BJ (cell line): ENCODE measurements at regions of chr9 and their contacts with region 1.

Region 1: GRCh38 chr9:128034821-128035764 is 32.0 kb downstream of the NAIF1 start:
- DNase-seq: no peak
- H3K4me3 ChIP-seq: no peak overlapping the region
- H3K27me3 ChIP-seq: no peaks in the 10 kb centered on the region
- CTCF ChIP-seq: peak; percentile 72

Region 2: GRCh38 chr9:127937388-127938280 is 97.5 kb before region 1 on chr9 and contains the start of gene DPM2:
- CTCF ChIA-PET with region 1: interaction called, 342 read pairs
- POLR2A ChIA-PET with region 1: no interaction called
- DNase-seq: no peak
- H3K4me3 ChIP-seq: peak within 1 kb of the TSS; percentile 64
- H3K27me3 ChIP-seq: no peaks in the 10 kb centered on the region
- CTCF ChIP-seq: no peak
- polyA plus RNA-seq, gene DPM2: 35.0 and 55.3 TPM in 2 replicates

Region 3: GRCh38 chr9:127955294-127956035 is 79.6 kb before region 1 on chr9:
- CTCF ChIA-PET with region 1: interaction called, 342 read pairs
- POLR2A ChIA-PET with region 1: no interaction called
- DNase-seq: no peak
- H3K4me3 ChIP-seq: no peak overlapping the region
- H3K27me3 ChIP-seq: no peaks in the 10 kb centered on the region
- CTCF ChIP-seq: no peak

Region 4: GRCh38 chr9:128007566-128008138 is 27.4 kb before region 1 on chr9:
- CTCF ChIA-PET with region 1: interaction called, 12 read pairs
- POLR2A ChIA-PET with region 1: no interaction called
- DNase-seq: no peak
- H3K4me3 ChIP-seq: no peak overlapping the region
- H3K27me3 ChIP-seq: no peaks in the 10 kb centered on the region
- CTCF ChIP-seq: no peak

Region 5: GRCh38 chr9:128020692-128021091 is 14.4 kb before region 1 on chr9:
- CTCF ChIA-PET with region 1: interaction called, 29 read pairs
- POLR2A ChIA-PET with region 1: no interaction called
- DNase-seq: no peak
- H3K4me3 ChIP-seq: no peak overlapping the region
- H3K27me3 ChIP-seq: no peaks in the 10 kb centered on the region
- CTCF ChIP-seq: peak; percentile 31

Region 6: DNA sequence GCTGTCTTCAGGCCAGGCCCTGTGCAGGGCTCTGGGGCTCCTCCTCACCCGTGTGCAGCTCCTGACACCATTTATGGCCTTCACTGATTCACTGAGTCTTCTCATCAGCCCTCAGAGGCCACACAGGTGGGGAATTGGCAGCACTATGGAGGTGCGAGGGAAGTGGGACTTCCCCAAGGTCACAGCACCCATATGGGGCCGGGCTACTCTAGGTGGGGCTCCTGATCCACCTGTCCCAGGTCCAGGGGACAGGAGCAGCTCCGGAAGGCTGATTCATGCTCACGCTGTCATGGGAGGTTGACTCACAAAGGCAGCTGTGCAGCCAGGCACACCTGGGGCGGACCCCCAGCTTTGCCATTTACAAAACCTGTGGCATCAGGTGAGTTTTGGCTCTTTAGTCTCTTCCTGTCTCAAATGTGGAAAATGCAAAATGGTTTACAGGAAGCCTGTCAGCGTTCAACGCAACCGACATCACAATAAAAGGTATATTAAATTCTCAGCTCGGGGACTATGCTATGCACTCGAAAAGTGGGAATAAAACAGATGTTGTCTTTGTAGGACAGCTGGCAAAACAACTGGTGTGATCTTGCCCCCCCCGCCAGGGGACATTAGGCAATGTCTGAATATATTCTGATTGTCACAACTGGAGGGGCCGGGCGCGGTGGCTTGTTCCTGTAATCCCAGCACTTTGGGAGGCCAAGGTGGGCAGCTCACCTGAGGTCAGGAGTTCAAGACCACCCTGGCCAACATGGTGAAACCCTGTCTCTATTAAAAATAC is 17.0 kb after region 1 on chr9:
- CTCF ChIA-PET with region 1: interaction called, 24 read pairs
- POLR2A ChIA-PET with region 1: no interaction called
- DNase-seq: no peak
- H3K4me3 ChIP-seq: no peak overlapping the region
- H3K27me3 ChIP-seq: no peaks in the 10 kb centered on the region
- CTCF ChIP-seq: no peak

Region 7: DNA sequence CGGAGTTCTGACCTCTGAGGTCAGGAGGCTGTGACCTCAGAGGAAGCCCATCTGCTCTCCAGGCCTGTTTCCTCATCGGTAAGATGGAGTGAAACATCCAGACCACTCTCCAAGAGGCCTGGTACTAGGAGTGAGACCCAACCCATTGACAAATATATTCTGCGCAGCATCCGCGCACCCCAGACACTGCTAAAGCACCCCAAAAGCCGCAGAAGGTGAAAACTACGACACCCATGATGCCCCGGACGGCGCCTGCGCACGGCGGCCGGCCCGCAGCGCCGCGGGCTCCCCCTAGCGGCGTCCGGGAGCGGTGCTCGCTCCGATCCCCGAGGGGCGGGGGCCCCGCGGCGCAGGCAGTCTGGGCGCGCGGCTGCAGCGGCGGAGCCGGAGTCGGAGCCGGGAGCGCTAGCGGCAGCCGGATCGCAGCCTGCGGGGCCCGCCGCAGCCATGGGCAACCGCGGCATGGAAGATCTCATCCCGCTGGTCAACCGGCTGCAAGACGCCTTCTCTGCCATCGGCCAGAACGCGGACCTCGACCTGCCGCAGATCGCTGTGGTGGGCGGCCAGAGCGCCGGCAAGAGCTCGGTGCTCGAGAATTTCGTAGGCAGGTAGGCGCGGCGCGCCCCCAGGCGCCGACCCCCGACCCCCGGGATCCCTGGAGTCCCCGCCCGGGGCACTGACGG is 168.1 kb after region 1 on chr9 and contains the start of gene DNM1:
- CTCF ChIA-PET with region 1: no interaction called
- POLR2A ChIA-PET with region 1: no interaction called
- DNase-seq: no peak
- H3K4me3 ChIP-seq: peak within 1 kb of the TSS; percentile 61
- H3K27me3 ChIP-seq: no peaks in the 10 kb centered on the region
- CTCF ChIP-seq: peak; percentile 17; the same call in 1 of the 2 replicates
- polyA plus RNA-seq, gene DNM1: 6.4 and 8.4 TPM in 2 replicates